Pancreas (tissue), 10 donors: ENCODE measurements at regions of chr11 and their contacts with region 1.

Region 1: DNA sequence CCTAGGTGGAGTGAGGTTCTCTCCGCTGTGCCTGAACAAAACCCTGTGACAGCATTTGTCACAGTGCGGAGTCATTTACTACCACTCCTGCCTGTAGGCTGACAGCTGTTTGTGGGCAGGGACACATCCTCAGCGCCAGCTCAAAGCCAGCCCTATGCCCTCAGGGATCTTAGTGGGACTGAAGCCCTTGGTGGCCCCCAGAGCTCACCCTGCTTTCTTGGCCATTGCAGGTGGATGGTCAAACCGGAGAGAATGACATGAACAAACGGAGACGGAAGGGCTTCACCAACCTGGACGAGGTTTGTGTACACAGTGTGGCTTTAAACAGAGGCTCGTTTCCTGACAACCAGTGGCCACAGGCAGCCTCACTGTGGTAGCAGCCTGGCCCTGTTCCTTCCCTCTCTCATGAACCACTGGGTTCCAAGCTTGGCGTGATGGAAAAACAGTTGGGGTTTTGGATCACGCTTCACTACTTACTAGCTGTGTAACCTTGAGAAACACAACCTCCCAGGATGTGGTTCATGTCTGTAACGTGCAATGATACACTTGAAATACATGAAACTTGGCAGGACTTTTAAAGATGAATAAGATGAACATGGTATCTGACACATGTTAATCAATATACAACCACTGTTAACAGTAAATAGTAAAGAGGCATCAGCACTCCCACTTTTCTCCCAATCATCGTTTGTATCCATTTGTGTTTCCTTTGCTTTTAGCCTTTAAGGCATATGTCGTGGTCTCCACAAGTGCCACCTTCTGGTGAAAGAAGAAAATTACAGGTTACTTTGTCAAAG is 125.8 kb downstream of the MICAL2 start:
- DNase-seq: no peak
- ATAC-seq: peak; percentile 38 to 67 (median 61)
- H3K4me3 ChIP-seq: no peak overlapping the region
- H3K27ac ChIP-seq: peak overlapping the region in 2 of 4 donors; percentile 10 to 19
- H3K4me1 ChIP-seq: peaks cover 13 to 27% (median 13%) of the 10 kb centered on the region in 3 donors
- H3K27me3 ChIP-seq: no peaks in the 10 kb centered on the region
- CTCF ChIP-seq: peak; percentile 17 to 63 (median 46)

Region 2: DNA sequence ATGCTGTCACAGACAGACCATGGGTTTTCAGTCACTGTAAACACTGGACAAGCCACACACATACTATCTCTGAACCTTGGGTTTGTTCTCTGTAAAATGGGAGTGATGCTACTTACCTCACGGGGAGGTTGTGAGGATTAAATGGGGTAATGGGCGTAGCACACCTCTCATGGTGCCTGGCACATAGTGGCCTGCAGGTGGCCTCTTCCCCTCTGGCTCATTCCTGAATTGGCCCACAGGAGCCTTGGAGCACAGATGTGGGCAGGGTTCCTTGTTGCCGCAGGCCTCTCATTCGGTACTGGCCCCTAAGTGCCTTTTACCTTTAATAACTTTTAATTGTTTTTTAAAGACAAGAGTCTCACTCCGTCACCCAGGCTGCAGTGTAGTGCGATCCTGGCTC is 114.1 kb before region 1 on chr11:
- intact Hi-C with region 1: loop called in 2 of 3 experiments (anchors 5 to 10 kb)
- DNase-seq: peak in 2 of 6 donors; percentile 26 to 40
- ATAC-seq: peak; percentile 71 to 85 (median 76)
- H3K4me3 ChIP-seq: no peak overlapping the region
- H3K27ac ChIP-seq: no peak overlapping the region
- H3K4me1 ChIP-seq: peaks cover 0 to 10% (median 4%) of the 10 kb centered on the region in 3 donors
- H3K27me3 ChIP-seq: no peaks in the 10 kb centered on the region
- CTCF ChIP-seq: peak; percentile 11 to 46 (median 19)